Astrocyte of the cerebellum (primary cell): ENCODE measurements at regions of chr9 and their contacts with region 1.

Region 1: DNA sequence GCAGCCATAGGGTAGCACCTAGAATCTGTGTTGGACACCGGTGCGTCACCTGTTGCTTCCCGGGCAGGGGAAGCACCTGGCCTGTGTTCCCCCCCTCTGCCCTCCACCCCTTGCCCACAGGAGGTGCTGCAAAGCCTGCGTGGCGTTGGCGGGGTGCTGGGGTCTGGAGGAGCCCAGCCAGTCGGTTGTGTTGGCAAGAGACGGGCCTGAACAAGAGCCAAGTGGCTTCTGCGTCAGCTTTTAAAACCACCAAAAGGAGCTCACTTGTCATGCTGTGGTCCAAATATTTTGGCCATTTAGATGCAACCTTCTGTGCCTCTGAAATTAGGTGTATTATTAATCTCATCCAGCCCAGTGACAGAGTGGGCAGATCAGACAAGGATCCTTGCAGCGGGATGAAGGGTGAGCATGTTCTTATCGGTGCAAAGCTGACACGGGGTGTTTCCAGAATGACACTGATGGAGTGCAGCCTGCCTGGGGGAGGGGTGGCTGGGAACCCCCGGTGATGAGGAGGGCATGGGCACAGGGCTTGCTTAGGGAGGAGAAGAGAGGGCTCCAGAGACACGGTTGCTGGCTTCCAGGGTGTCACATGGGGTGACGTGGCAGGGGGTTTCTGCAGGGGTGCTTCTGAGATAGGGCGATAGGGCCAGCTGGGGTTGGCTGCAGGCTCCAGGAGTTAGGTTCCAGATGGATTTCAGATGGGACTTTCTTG is 9.7 kb upstream of the RXRA start:
- DNase-seq: peak; percentile 60
- H3K4me3 ChIP-seq: no peak overlapping the region
- CTCF ChIP-seq: no peak

Region 2: GRCh38 chr9:134185536-134186011 is 131.0 kb before region 1 on chr9:
- in situ Hi-C with region 1: loop called (anchors 5 kb)
- DNase-seq: no peak
- H3K4me3 ChIP-seq: no peak overlapping the region
- CTCF ChIP-seq: no peak

Region 3: DNA sequence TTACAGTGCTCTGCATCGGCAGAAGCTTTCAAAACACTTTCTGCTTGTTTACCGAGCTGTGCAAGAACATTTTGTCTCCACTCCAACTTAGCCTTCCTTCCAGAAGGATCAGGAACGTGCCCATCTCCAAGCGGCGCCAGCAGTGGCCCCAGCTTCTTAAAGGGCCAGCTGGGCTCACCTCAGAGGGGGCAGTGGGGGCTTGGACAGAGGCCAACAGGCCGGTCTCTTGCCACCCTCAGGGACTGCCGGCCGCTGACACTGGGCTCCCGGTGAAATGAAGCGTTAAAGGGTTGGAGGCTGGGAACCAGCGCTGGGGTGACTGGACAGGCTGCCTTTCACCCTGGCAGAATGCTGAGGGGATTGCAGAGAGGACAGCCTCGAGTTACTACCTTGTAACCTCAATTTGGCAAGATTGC is 85.3 kb before region 1 on chr9:
- in situ Hi-C with region 1: loop called (anchors 5 kb)
- DNase-seq: no peak
- H3K4me3 ChIP-seq: no peak overlapping the region
- CTCF ChIP-seq: no peak

Region 4: GRCh38 chr9:134267881-134268724 is 48.5 kb before region 1 on chr9:
- in situ Hi-C with region 1: loop called (anchors 10 kb)
- DNase-seq: no peak
- H3K4me3 ChIP-seq: no peak overlapping the region
- CTCF ChIP-seq: no peak

Region 5: DNA sequence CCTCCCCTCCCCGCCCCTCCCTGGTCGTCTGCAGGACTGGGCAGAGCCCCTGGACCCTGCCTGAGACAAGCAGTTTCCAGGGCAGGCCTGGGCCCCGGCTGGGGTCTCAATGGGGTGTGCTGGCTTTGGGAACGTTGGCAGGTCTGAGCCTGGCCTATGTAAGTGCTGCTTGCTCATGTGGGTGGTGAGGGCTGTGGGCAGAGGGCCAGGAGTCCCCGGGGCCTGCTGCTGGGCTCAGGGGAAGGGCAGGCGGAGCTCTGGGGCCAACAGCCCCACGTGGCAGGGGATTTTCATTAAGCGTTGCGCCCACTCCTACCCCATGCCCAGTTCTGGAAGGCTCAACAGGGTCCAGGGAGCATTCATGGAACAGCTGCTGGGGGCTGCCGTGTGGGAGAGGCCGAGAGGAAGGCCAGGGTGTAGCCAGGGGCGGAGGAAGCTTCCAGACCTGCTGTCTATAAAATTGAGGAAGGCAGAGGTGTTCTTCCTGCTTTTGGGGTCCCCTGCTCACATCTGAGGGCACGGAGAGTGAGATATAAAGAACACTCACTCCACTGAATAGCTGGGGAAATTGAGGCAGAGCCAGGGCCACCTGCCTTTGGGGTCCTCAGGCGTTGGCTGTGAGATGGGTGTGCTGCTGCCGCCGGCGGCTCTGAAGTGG is 42.2 kb after region 1 on chr9:
- in situ Hi-C with region 1: loop called (anchors 5 kb)
- DNase-seq: no peak
- H3K4me3 ChIP-seq: no peak overlapping the region
- CTCF ChIP-seq: no peak

Region 6: DNA sequence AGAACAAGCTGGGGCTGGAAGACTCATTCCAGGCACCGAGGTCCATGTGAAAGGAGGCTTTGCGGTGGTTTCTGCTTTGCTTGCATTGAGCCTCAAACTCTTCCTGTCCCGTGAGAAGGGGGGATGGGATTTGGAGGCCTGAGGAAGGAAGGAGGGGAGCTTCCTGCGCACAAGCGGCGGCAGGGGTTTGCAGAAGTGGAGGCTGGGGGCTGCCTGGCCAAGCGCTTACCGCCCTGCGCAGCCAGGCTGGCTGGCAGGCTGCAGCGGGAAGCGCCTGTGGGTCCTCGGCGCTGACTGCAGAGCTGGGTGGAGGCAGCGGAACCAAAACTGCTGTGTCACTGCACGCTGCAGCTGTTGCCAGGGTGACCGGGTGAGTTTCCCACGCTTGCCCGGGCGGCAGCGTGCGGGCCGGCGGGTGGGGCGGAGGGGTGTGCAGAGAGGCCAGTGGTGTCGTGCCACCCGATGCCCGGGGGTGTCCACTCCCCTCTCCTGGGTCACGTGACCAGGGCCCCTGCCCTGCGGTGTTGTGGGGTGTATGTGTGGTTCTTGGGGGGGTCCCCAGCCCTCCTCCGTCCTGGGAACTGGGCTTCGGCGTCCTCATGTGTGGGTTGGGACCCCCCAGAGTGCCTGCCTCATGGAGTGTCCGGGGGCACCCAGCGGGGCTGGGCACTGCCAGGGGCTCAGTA is 90.7 kb after region 1 on chr9:
- in situ Hi-C with region 1: loop called (anchors 10 kb)
- DNase-seq: peak; percentile 58
- H3K4me3 ChIP-seq: peak overlapping the region; percentile 9
- CTCF ChIP-seq: no peak